Colonic mucosa (tissue), 4 donors: ENCODE measurements at regions of chr16 and their contacts with region 1.

Region 1: DNA sequence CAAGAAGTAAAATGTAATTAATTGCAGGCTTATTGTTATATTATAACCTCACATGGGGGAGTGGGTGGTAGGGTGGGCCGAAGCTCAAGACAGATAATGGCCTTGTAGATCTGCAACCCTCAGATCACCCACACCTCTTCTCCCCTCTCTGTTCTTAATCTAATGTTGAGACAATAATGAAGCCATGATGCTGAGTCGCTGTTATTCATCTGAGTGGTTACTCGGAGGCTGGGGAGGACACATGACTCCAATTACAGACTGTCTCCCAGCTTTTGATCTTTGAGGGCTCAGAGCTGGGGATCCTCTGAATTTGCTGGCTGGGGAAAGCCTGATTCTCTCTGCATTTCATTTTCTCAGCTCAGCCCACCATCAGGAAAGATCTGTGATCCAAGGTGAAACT is 275.3 kb downstream of the SHISA9 start:
- DNase-seq: no peak
- H3K4me3 ChIP-seq: no peak overlapping the region
- H3K27ac ChIP-seq: no peak overlapping the region
- H3K4me1 ChIP-seq: no peaks in the 10 kb centered on the region
- H3K27me3 ChIP-seq: no peaks in the 10 kb centered on the region
- CTCF ChIP-seq: no peak

Region 2: DNA sequence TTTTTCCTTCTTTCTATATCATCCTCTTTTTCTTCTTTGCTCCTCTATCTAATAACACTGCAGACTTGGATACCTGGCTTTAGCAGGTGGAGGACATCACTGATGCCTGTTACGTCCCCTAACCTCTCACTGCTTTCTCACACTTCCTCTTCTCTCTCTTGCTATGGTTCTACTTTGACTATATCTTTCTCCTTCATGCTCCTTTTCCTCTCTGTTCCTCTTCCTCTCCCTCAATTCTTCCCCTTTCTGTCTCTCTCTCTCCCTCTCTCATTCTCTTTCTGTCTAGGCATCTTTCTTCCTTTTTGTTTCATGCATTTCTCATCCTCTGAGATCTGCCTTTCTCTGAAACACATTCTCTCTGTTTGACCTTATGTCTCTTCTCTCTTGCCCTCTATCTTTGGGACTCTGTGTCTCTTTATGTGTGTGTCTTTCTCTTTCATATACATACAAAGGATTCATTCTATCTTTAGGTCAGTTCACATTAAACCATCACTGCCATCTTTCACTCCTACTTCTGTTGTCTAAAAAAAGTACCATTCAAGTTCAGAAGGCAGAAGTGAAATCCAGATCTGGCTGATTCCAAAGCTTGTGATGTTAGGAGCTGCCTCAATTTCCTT is 78.4 kb after region 1 on chr16:
- intact Hi-C with region 1: loop called (anchors 10 kb)
- DNase-seq: no peak
- H3K4me3 ChIP-seq: no peak overlapping the region
- H3K27ac ChIP-seq: no peak overlapping the region
- H3K4me1 ChIP-seq: no peaks in the 10 kb centered on the region
- H3K27me3 ChIP-seq: no peaks in the 10 kb centered on the region
- CTCF ChIP-seq: no peak